GM12878 (cell line): ENCODE measurements at regions of chr1 and their contacts with region 1.

Region 1: DNA sequence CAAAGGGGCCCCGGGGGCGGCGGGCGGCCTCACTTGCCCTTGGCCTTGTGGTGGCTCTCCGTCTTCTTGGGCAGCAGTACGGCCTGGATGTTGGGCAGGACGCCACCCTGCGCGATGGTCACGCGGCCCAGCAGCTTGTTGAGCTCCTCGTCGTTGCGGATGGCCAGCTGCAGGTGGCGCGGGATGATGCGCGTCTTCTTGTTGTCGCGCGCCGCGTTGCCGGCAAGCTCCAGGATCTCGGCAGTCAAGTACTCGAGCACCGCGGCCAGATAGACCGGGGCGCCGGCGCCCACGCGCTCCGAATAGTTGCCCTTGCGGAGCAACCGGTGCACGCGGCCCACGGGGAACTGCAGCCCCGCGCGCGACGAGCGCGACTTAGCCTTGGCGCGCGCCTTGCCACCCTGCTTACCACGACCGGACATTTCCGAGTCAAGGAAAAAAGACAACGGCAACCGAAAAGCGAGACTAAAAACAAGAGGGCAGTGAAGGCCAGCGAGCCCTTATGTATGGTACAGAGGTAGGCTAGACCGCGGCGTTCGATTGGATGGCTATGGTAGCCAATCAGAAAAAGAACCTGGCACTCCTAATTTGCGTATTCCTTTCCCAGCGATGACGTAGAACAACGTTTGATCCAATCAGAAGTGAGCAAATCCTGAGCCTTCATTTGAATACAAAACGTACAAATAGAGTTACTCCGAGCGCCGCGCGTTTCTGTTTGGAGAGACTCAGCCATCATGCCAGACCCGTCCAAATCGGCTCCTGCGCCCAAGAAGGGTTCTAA is 29.6 kb upstream of the RNF187 start:
- DNase-seq: peak; percentile 89
- ATAC-seq: peak; percentile 91
- H3K4me3 ChIP-seq: peak overlapping the region; percentile 64
- H3K27ac ChIP-seq: peak overlapping the region; percentile 66
- H3K4me1 ChIP-seq: no peaks in the 10 kb centered on the region
- H3K27me3 ChIP-seq: no peaks in the 10 kb centered on the region
- CTCF ChIP-seq: no peak; a peak in 1 of 6 replicates
- EP300 ChIP-seq: no peak
- POLR2A ChIP-seq: peak; percentile 93
- RAD21 ChIP-seq: no peak

Region 2: GRCh38 chr1:228405987-228406265 is 51.7 kb before region 1 on chr1:
- CTCF ChIA-PET with region 1: no interaction called
- POLR2A ChIA-PET with region 1: no interaction called
- RAD21 ChIA-PET with region 1: interaction called, 4 read pairs
- SMC1A ChIA-PET with region 1: no interaction called
- in situ Hi-C with region 1: no loop called
- intact Hi-C with region 1: loop called (anchors 2 kb)
- DNase-seq: no peak
- ATAC-seq: peak; percentile 44
- H3K4me3 ChIP-seq: peak overlapping the region; percentile 97
- H3K27ac ChIP-seq: peak overlapping the region; percentile 86
- H3K4me1 ChIP-seq: peaks cover 4% of the 10 kb centered on the region; the same call in 1 of the 2 replicates
- H3K27me3 ChIP-seq: no peaks in the 10 kb centered on the region
- CTCF ChIP-seq: no peak
- EP300 ChIP-seq: no peak
- POLR2A ChIP-seq: no peak
- RAD21 ChIP-seq: no peak

Region 3: DNA sequence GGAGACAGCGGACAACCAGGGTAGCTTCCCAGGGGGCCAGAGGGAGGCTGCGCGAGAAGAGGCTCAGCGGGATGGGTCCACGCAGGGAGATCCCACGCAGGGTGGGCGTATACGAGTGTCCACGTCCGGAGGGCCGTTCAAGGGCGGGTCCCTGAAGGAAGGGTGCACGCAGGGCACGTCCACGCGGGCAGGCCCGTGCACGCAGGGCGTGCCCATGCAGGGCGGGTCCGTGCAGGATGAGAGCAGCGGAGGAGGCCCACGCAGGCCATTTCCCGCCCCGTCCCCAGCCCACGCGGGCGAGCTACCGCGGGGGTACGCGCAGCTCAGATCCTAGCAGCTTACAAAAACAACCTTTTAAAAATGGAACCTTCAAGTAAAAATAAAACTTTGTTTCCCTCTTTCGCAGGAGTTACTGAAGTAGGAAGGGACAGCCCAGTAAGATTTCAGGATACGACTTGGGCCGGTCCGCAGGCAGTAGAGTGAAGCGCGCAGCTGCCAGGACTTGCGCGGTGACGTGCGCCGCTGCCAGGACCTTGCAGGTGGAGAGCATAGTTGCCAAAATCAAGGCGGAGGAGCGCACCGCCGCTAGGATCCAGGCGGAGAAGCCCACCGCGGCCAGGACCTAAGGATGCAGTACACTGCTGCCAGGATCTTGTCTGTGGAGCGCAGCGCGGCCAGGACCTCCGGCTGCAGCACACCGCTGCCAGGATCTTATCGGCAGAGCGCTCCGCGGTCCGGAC is 29.2 kb after region 1 on chr1:
- CTCF ChIA-PET with region 1: no interaction called
- POLR2A ChIA-PET with region 1: interaction called, 4 read pairs
- RAD21 ChIA-PET with region 1: no interaction called
- SMC1A ChIA-PET with region 1: no interaction called
- in situ Hi-C with region 1: no loop called
- intact Hi-C with region 1: loop called (anchors 2 kb)
- DNase-seq: peak; percentile 71
- ATAC-seq: peak; percentile 81
- H3K4me3 ChIP-seq: peak overlapping the region; percentile 76
- H3K27ac ChIP-seq: peak overlapping the region; percentile 95
- H3K4me1 ChIP-seq: peaks cover 28% of the 10 kb centered on the region
- H3K27me3 ChIP-seq: no peaks in the 10 kb centered on the region
- CTCF ChIP-seq: no peak
- EP300 ChIP-seq: peak; percentile 42 to 79; a peak in 1 of 4 replicates
- POLR2A ChIP-seq: peak; percentile 82
- RAD21 ChIP-seq: no peak